Activated B cell treated with CpG ODN at 0.5 μM for 24 hours (primary cell): ENCODE measurements at regions of chr5 and their contacts with region 1.

Region 1: GRCh38 chr5:170267431-170268152 is 30.0 kb downstream of the LCP2 start:
- DNase-seq: peak; percentile 60
- ATAC-seq: peak; percentile 96
- H3K4me3 Mint-ChIP-seq: peak overlapping the region; percentile 4
- H3K27ac Mint-ChIP-seq: no peak overlapping the region
- H3K4me1 Mint-ChIP-seq: peaks cover 23% of the 10 kb centered on the region
- H3K27me3 Mint-ChIP-seq: no peaks in the 10 kb centered on the region
- CTCF ChIP-seq: peak; percentile 73

Region 2: GRCh38 chr5:170225326-170226128 is 42.1 kb before region 1 on chr5:
- CTCF ChIA-PET with region 1: interaction called, 25 read pairs
- POLR2A ChIA-PET with region 1: no interaction called
- intact Hi-C with region 1: loop called (anchors 1 kb)
- DNase-seq: no peak
- ATAC-seq: peak; percentile 49
- H3K4me3 Mint-ChIP-seq: no peak overlapping the region
- H3K27ac Mint-ChIP-seq: no peak overlapping the region
- H3K4me1 Mint-ChIP-seq: no peaks in the 10 kb centered on the region
- H3K27me3 Mint-ChIP-seq: no peaks in the 10 kb centered on the region
- CTCF ChIP-seq: peak; percentile 83

Region 3: DNA sequence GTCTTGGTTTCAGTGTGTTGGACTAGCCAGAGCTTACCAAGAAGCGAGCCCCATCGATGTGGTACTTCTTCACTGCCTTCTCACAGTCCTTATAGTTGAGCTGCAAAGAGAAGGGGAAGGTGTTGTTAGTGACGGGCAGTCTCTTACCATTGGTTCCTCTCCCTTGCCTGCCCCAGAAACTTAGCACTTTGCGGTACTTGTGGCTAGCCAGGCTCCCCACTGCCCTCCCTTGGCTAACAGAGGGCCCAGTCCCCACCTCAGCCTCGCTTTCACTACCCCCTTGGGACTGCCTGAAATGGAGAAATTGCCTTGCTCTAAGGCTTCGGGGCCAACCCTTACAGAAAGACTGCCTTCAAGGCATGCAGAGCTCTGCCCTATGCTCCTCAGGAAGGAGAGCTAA is 25.7 kb after region 1 on chr5:
- CTCF ChIA-PET with region 1: interaction called, 23 read pairs
- POLR2A ChIA-PET with region 1: interaction called, 3 read pairs
- intact Hi-C with region 1: loop called (anchors 1 kb)
- DNase-seq: peak; percentile 60
- ATAC-seq: peak; percentile 88
- H3K4me3 Mint-ChIP-seq: peak overlapping the region; percentile 12
- H3K27ac Mint-ChIP-seq: peak overlapping the region; percentile 37
- H3K4me1 Mint-ChIP-seq: peaks cover 57% of the 10 kb centered on the region
- H3K27me3 Mint-ChIP-seq: peaks cover 15% of the 10 kb centered on the region
- CTCF ChIP-seq: no peak

Region 4: DNA sequence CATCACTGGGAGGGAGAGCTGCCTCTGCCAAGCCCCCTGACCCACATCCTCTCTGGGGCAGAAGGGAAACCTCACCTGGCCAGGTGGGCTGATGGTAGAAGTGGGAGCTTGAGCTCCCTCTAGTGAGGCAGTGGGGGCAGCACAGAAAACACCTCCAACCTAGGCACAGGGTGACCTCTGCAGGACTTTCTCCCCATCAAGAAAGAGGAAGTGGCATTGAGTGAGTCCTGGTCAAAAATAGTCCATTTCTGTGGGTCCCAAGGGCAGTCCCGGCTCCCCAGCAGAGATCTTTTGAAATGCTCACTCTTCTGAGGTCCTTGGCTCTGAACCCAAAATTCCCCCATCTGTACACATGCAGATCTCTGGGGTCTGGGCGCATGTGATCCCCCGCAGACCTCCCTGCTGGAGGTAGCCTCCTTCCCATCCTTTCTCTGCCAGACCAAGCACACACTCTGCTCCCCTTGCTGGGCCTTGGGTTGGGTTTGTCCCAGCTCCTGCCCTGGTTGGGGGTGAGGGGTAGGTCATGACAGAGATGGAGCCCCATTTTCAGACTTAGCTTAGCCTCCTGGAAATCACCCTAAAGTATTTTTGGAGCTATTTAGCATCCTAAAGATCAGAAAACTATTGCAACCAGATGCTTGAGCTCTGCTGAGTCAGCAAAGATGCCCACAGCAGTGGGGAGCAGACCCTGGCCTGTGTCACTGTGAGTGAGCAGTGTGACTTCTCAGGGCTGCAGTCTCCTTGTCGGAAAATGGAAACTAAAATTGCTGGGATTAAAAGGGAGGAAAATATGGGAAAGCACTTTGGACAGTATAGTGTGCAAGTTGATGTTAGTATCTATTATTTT is 71.6 kb after region 1 on chr5:
- CTCF ChIA-PET with region 1: interaction called, 289 read pairs
- POLR2A ChIA-PET with region 1: interaction called, 9 read pairs
- intact Hi-C with region 1: loop called (anchors 1 kb)
- DNase-seq: peak; percentile 35
- ATAC-seq: peak; percentile 90
- H3K4me3 Mint-ChIP-seq: no peak overlapping the region
- H3K27ac Mint-ChIP-seq: no peak overlapping the region
- H3K4me1 Mint-ChIP-seq: peaks cover 20% of the 10 kb centered on the region
- H3K27me3 Mint-ChIP-seq: no peaks in the 10 kb centered on the region
- CTCF ChIP-seq: peak; percentile 48

Region 5: GRCh38 chr5:170475294-170476000 is 207.9 kb after region 1 on chr5:
- CTCF ChIA-PET with region 1: no interaction called
- POLR2A ChIA-PET with region 1: no interaction called
- intact Hi-C with region 1: no loop called
- DNase-seq: no peak
- ATAC-seq: no peak
- H3K4me3 Mint-ChIP-seq: no peak overlapping the region
- H3K27ac Mint-ChIP-seq: no peak overlapping the region
- H3K4me1 Mint-ChIP-seq: peaks cover 4% of the 10 kb centered on the region
- H3K27me3 Mint-ChIP-seq: peaks cover 2% of the 10 kb centered on the region
- CTCF ChIP-seq: no peak